Naive thymus-derived CD4-positive, alpha-beta T cell (primary cell): ENCODE measurements at regions of chr12 and their contacts with region 1.

Region 1: GRCh38 chr12:53492830-53493611 is 6.2 kb downstream of the MAP3K12 start:
- DNase-seq: peak; percentile 72 to 90 (median 80)
- ATAC-seq: peak; percentile 98
- H3K4me3 ChIP-seq: peak overlapping the region; percentile 82
- H3K4me3 Mint-ChIP-seq: peak overlapping the region; percentile 89 to 98 (median 92)
- H3K27ac ChIP-seq: peak overlapping the region; percentile 87
- H3K27ac Mint-ChIP-seq: peak overlapping the region; percentile 88 to 98 (median 95)
- H3K4me1 ChIP-seq: peaks cover 12 to 16% of the 10 kb centered on the region in 2 donors
- H3K4me1 Mint-ChIP-seq: peaks cover 19 to 51% (median 40%) of the 10 kb centered on the region in 7 donors
- H3K27me3 ChIP-seq: no peaks in the 10 kb centered on the region
- H3K27me3 Mint-ChIP-seq: no peaks in the 10 kb centered on the region

Region 2: GRCh38 chr12:53508534-53509199 is 15.6 kb after region 1 on chr12:
- CTCF ChIA-PET with region 1: interaction called, 4 read pairs
- POLR2A ChIA-PET with region 1: interaction called, 10 read pairs
- intact Hi-C with region 1: no loop called
- DNase-seq: peak; percentile 63 to 82 (median 73)
- ATAC-seq: peak; percentile 98
- H3K4me3 ChIP-seq: no peak overlapping the region
- H3K4me3 Mint-ChIP-seq: peak overlapping the region in 1 of 10 donors; percentile 39
- H3K27ac ChIP-seq: peak overlapping the region; percentile 39
- H3K27ac Mint-ChIP-seq: peak overlapping the region in 8 of 9 donors; percentile 13 to 80 (median 66)
- H3K4me1 ChIP-seq: peaks cover 6 to 7% of the 10 kb centered on the region in 2 donors
- H3K4me1 Mint-ChIP-seq: peaks cover 5 to 17% (median 9%) of the 10 kb centered on the region in 7 donors
- H3K27me3 ChIP-seq: no peaks in the 10 kb centered on the region
- H3K27me3 Mint-ChIP-seq: no peaks in the 10 kb centered on the region